Mammary epithelial cell (primary cell): ENCODE measurements at regions of chr2 and their contacts with region 1.

Region 1: DNA sequence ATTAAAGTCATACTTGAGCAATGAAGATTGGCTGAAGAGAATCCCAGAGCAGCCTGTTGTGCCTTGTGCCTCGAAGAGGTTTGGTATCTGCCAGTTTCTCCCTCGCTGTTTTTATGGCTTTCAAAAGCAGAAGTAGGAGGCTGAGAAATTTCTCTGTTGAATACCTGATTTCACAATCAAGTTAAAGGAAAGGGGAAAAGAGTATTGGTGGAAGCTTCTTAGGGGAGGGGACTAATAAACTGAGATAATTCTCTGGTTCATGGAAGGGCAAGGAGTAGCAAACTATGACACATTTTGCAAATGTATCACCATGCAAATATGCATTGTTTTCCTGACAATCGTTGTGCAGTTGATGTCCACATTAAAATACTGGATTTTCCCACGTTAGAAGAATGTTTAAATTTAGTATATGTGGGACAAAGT is at the start of gene IL1B:
- DNase-seq: peak; percentile 92
- H3K4me3 ChIP-seq: peak within 1 kb of the TSS; percentile 44 to 57 (median 44)
- H3K27ac ChIP-seq: peak within 1 kb of the TSS; percentile 88
- H3K4me1 ChIP-seq: peaks cover 56% of the 10 kb centered on the region
- H3K27me3 ChIP-seq: no peaks in the 10 kb centered on the region
- CTCF ChIP-seq: no peak
- total RNA-seq, gene IL1B: 5.0 to 219 TPM

Region 2: DNA sequence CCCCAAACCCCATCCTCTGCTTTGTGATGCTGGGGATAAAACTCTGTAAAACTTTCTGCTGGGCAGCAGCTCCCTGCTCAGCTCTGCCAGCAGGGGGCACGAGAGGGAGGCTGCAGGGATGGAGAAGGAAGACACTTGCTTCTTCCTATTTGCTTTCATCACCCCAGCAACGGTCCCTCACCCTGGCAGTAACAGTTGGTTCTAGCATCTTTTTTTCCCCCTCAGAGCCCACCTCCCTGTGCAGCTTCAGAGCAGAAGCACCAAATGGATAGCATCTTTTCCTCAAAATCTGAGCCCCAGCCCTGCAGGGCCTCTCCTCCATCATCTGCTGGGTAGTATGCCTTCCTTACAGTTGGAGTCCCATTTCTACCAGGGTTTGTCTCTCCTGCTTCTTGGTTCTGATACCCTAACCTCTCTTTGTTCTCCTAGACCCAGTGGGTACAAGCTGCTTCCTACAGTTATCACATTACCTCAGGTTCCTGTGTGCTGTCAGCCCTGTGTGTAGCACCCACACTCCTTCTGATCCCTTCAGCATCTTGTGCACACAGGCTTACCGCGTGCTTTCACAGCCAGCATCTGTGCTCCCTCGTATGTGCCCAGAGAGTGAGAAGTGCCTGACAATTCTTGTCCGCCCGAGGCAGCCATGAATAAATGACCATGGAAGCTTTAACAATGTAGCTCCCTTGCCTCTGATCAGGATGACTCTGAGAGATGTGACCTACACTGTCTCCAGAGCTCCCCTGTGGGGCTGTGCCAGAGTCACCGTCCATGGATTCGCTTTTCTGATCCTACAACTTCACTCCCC is 86.7 kb before region 1 on chr2:
- CTCF ChIA-PET with region 1: interaction called, 3 read pairs
- dilution Hi-C with region 1: no loop called
- in situ Hi-C with region 1: no loop called
- intact Hi-C with region 1: loop called (anchors 1 kb)
- DNase-seq: peak; percentile 60
- H3K4me3 ChIP-seq: no peak overlapping the region
- H3K27ac ChIP-seq: peak overlapping the region; percentile 28
- H3K4me1 ChIP-seq: peaks cover 6% of the 10 kb centered on the region
- H3K27me3 ChIP-seq: no peaks in the 10 kb centered on the region
- CTCF ChIP-seq: peak; percentile 97 to 99

Region 3: DNA sequence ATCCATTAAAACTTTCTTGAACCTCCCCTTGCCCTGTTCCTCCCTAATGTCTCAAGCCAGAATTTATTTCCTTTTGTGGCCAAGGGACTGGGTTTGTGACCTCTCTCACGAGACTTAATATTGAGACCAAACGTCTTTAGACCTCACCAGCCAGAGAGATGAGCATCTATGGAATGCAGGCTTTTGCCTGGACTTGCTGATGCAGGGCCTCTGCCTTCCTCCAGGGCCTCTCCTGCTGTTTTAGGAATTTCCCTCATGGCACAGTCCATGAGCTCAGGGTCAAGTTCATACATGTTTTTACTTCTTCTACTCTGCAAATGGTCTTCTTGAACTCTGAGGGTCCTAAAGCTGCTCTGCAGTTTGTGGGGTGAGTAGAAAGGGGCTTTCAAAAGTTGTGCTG is 22.4 kb before region 1 on chr2:
- CTCF ChIA-PET with region 1: no interaction called
- dilution Hi-C with region 1: no loop called
- in situ Hi-C with region 1: no loop called
- intact Hi-C with region 1: loop called (anchors 1 kb)
- DNase-seq: peak; percentile 93
- H3K4me3 ChIP-seq: no peak overlapping the region
- H3K27ac ChIP-seq: peak overlapping the region; percentile 91
- H3K4me1 ChIP-seq: peaks cover 53% of the 10 kb centered on the region
- H3K27me3 ChIP-seq: no peaks in the 10 kb centered on the region
- CTCF ChIP-seq: peak; percentile 4 to 27

Region 4: GRCh38 chr2:112884869-112885505 is 48.3 kb after region 1 on chr2:
- CTCF ChIA-PET with region 1: no interaction called
- dilution Hi-C with region 1: no loop called
- in situ Hi-C with region 1: no loop called
- intact Hi-C with region 1: loop called (anchors 1 kb)
- DNase-seq: peak; percentile 44
- H3K4me3 ChIP-seq: no peak overlapping the region
- H3K27ac ChIP-seq: no peak overlapping the region
- H3K4me1 ChIP-seq: peaks cover 43% of the 10 kb centered on the region
- H3K27me3 ChIP-seq: no peaks in the 10 kb centered on the region
- CTCF ChIP-seq: peak; percentile 79 to 93

Region 5: GRCh38 chr2:112941753-112942658 is 105.3 kb after region 1 on chr2:
- CTCF ChIA-PET with region 1: interaction called, 4 read pairs
- dilution Hi-C with region 1: loop called (anchors 5 kb)
- in situ Hi-C with region 1: no loop called
- intact Hi-C with region 1: loop called (anchors 1 kb)
- DNase-seq: peak; percentile 77
- H3K4me3 ChIP-seq: no peak overlapping the region
- H3K27ac ChIP-seq: no peak overlapping the region
- H3K4me1 ChIP-seq: peaks cover 23% of the 10 kb centered on the region
- H3K27me3 ChIP-seq: no peaks in the 10 kb centered on the region
- CTCF ChIP-seq: peak; percentile 99